Psoas muscle (tissue), 8 donors: ENCODE measurements at regions of chr16 and their contacts with region 1.

Region 1: DNA sequence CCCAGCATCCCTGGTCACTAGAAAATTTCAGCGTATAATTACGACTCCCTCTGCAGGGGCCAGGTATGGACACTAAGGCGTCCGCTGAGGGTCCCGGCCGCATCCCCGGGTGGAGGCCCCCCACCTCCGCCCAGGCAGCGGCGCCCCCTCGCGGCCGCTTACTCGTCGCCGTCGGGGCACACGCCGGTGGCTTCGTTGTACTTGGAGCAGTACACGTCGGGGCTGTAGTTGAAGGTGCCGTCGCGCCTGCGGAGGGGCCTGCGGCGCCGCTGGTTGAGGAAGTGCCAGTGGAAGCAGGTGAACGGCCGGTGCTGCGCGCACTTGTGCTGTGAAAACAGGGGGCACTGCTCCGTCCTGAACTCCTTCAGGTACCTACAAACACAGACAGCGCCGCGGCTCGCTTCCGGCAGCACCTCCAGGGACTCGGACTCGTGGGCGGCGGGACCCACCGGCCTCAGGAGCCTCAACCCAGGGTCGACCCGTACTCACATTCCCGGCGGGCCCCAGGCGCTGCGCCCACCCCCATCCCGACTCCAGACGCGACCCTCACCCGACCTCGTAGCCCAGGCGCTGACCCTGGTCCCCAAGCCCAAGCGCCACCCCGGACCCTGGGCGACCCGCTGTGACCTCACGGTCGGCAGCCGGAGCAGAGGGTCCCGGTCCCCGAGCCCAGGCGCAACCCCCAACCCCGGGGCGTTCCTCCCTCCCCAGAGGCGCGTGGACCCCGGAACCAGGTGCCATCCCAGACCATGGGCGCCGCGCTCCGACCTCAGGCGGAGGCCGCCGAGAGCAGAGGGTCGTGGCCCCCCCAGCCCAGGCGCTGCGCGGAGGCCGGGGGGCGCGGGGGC is 596 bp downstream of the UNKL start:
- DNase-seq: peak; percentile 60 to 77
- ATAC-seq: peak; percentile 55 to 71 (median 66)
- H3K4me3 ChIP-seq: peak overlapping the region; percentile 92
- H3K27ac ChIP-seq: peak overlapping the region; percentile 80
- H3K4me1 ChIP-seq: peaks cover 12% of the 10 kb centered on the region
- H3K27me3 ChIP-seq: no peaks in the 10 kb centered on the region
- CTCF ChIP-seq: peak; percentile 58

Region 2: DNA sequence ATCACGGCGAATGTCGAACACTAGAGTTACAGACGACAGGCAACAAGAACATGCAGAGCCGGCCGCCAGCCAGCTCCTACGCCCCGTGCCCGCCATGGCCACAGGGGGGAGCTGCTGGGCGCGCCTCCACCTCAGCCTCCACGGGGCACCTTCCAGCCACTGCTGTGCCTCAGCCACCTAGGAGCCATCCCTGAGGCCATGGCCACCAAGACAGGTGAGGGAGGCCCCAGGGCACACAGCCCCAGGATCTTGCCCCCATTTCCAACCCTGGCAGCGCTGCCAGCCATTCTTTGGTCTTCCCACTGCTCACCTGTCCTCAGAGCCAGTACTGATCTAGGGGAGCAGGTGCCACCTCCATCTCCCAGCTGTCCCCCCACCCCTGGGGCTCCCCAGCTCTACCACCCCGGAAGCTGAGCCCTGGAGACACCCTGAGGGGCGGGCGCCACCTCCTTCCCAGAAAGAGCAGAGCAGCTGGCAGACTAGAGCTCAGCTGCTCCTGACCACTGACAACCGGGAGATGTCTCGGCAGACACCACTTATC is 50.3 kb before region 1 on chr16:
- intact Hi-C with region 1: loop called in 1 of 2 experiments (anchors 5 kb)
- DNase-seq: peak; percentile 62 to 84
- ATAC-seq: peak; percentile 84 to 92 (median 90)
- H3K4me3 ChIP-seq: no peak overlapping the region
- H3K27ac ChIP-seq: no peak overlapping the region
- H3K4me1 ChIP-seq: no peaks in the 10 kb centered on the region
- H3K27me3 ChIP-seq: no peaks in the 10 kb centered on the region
- CTCF ChIP-seq: peak; percentile 79